CD4-positive, alpha-beta T cell (primary cell): ENCODE measurements at regions of chr11 and their contacts with region 1.

Region 1: GRCh38 chr11:96342961-96343711 is at the start of gene MAML2:
- DNase-seq: peak; percentile 83 to 97 (median 89)
- ATAC-seq: peak; percentile 88
- H3K4me3 ChIP-seq: peak within 1 kb of the TSS; percentile 92
- H3K4me3 Mint-ChIP-seq: peak within 1 kb of the TSS; percentile 97
- H3K27ac ChIP-seq: peak within 1 kb of the TSS; percentile 45 to 86
- H3K27ac Mint-ChIP-seq: peak within 1 kb of the TSS; percentile 87
- H3K4me1 ChIP-seq: peaks cover 43% of the 10 kb centered on the region
- H3K4me1 Mint-ChIP-seq: peaks cover 32% of the 10 kb centered on the region
- H3K27me3 ChIP-seq: no peaks in the 10 kb centered on the region
- H3K27me3 Mint-ChIP-seq: no peaks in the 10 kb centered on the region
- CTCF ChIP-seq: peak; percentile 96
- total RNA-seq, gene MAML2: 58.8 to 59.8 TPM

Region 2: DNA sequence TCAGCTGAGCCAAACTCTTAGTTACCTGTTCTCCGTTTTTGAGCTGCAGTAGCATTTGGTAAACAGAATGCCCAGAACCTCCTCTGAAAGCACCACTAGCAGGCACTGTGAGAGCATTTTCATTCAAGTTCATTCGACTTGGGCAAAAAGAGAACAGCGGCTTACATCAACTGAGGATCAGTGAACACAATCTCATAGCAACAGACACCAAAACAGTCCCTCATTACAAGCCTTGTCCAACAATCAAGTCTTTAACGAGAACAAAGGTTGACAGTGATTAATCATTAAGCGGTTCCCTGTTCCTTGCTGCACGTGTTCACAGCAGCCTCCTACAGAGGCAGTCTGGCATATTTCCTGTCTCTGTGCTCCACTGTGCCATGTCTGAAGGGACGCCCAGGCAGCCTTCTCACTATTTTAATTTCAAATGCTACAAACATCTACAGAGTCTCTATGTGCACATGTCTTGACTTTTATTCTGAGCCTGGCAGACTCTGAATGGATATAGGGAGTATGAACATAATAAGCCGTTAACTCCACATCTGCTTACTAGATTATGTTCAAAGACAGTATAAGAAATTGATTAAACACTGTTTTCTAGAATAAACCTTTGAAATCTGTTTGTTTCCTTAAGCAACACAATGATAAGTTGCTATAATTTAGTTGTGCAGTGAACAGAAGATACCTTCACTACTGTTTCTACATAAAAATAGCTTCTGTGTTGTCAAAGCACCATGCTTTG is 330.9 kb before region 1 on chr11:
- CTCF ChIA-PET with region 1: interaction called, 80 read pairs
- POLR2A ChIA-PET with region 1: interaction called, 37 read pairs
- intact Hi-C with region 1: loop called (anchors 1 to 2 kb)
- DNase-seq: peak; percentile 34 to 89 (median 57)
- ATAC-seq: peak; percentile 75
- H3K4me3 ChIP-seq: peak overlapping the region; percentile 24
- H3K4me3 Mint-ChIP-seq: peak overlapping the region; percentile 54
- H3K27ac ChIP-seq: peak overlapping the region; percentile 10 to 82
- H3K27ac Mint-ChIP-seq: no peak overlapping the region
- H3K4me1 ChIP-seq: peaks cover 33% of the 10 kb centered on the region
- H3K4me1 Mint-ChIP-seq: peaks cover 21% of the 10 kb centered on the region
- H3K27me3 ChIP-seq: no peaks in the 10 kb centered on the region
- H3K27me3 Mint-ChIP-seq: no peaks in the 10 kb centered on the region
- CTCF ChIP-seq: peak; percentile 39

Region 3: DNA sequence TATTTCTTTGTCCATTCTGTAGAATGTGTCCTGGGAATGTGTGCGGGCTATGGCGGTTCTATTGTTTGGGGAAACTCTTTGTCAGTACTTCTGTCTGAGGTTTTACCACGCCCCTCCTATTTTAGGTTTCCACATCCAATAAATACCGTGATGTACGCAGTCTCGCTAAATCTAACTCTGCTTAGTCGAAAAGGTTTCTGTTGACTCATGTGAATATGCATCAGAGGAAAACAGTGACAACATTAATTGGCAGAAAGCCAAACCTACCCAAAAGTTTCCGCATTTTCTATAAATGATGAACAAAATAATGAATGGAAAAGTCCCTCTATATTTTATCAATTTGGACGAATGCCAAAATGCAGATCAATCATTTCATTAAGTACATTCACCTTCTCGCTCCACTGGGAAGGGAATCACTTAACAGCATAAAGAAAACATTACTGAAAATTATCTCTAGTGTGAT is 143.5 kb before region 1 on chr11:
- CTCF ChIA-PET with region 1: interaction called, 7 read pairs
- POLR2A ChIA-PET with region 1: interaction called, 10 read pairs
- intact Hi-C with region 1: loop called in 1 of 2 experiments (anchors 5 kb)
- DNase-seq: peak in 6 of 14 experiments; percentile 19 to 85 (median 58)
- ATAC-seq: peak; percentile 87
- H3K4me3 ChIP-seq: peak overlapping the region; percentile 12
- H3K4me3 Mint-ChIP-seq: peak overlapping the region; percentile 81
- H3K27ac ChIP-seq: no peak overlapping the region
- H3K27ac Mint-ChIP-seq: peak overlapping the region; percentile 87
- H3K4me1 ChIP-seq: peaks cover 31% of the 10 kb centered on the region
- H3K4me1 Mint-ChIP-seq: peaks cover 89% of the 10 kb centered on the region
- H3K27me3 ChIP-seq: no peaks in the 10 kb centered on the region
- H3K27me3 Mint-ChIP-seq: no peaks in the 10 kb centered on the region
- CTCF ChIP-seq: no peak

Region 4: DNA sequence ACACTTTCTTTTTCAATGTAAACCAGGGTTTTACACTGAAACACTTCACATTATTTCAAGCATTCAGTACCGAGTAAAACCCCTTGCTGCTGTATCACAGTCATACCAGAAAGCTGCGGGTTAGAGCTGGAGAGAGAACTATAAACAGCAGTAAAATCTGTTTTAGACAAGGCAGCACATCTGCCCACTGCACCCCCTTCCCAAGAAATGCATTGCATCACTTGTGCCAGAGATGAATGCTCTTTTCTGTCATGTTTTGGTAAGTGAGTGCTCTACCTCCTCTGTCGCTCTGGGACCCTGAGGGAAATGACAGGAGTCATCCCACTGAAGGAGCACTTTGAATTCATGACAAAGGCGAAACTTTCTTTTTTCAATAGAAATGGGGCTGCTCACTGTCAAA is 107.4 kb before region 1 on chr11:
- CTCF ChIA-PET with region 1: interaction called, 14 read pairs
- POLR2A ChIA-PET with region 1: interaction called, 4 read pairs
- intact Hi-C with region 1: no loop called
- DNase-seq: no peak
- ATAC-seq: peak; percentile 71
- H3K4me3 ChIP-seq: no peak overlapping the region
- H3K4me3 Mint-ChIP-seq: peak overlapping the region; percentile 37
- H3K27ac ChIP-seq: no peak overlapping the region
- H3K27ac Mint-ChIP-seq: no peak overlapping the region
- H3K4me1 ChIP-seq: peaks cover 4% of the 10 kb centered on the region
- H3K4me1 Mint-ChIP-seq: peaks cover 34% of the 10 kb centered on the region
- H3K27me3 ChIP-seq: no peaks in the 10 kb centered on the region
- H3K27me3 Mint-ChIP-seq: no peaks in the 10 kb centered on the region
- CTCF ChIP-seq: no peak

Region 5: DNA sequence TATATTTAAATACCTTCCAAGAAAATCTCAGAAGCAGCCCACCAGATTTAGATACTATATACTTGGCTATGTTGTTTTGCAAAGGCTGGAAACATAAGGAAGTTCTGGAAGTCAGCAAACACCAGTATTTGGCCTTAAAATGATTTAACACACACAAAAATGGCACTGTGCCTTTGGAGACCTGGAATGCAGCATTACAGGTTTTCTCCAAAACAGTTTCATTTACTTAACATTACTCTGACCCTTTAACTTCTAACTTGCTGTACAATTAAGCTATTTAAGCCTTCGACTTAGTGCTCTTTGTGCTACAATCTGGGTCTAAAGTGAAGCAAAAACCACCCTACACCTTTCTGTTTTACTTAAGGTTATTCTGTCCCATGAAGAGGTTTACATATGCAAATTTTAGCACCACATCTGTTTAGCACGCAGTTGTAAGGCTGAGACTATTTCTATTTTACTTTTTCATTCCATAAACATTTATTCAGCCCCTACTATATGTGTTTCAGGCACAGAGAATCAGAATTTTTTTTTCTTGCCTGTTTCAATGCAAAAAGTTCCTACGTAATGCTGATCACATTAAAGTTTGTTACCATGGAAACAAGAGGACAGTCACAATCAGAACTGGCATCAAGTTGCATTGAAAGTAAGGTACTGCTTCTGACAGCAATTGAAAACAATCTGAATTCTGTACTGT is 70.5 kb before region 1 on chr11:
- CTCF ChIA-PET with region 1: interaction called, 13 read pairs
- POLR2A ChIA-PET with region 1: interaction called, 27 read pairs
- intact Hi-C with region 1: loop called (anchors 5 kb)
- DNase-seq: peak in 3 of 14 experiments; percentile 69 to 82 (median 75)
- ATAC-seq: peak; percentile 91
- H3K4me3 ChIP-seq: no peak overlapping the region
- H3K4me3 Mint-ChIP-seq: peak overlapping the region; percentile 2
- H3K27ac ChIP-seq: peak overlapping the region; percentile 14 to 27
- H3K27ac Mint-ChIP-seq: peak overlapping the region; percentile 83
- H3K4me1 ChIP-seq: peaks cover 6% of the 10 kb centered on the region
- H3K4me1 Mint-ChIP-seq: peaks cover 57% of the 10 kb centered on the region
- H3K27me3 ChIP-seq: no peaks in the 10 kb centered on the region
- H3K27me3 Mint-ChIP-seq: no peaks in the 10 kb centered on the region
- CTCF ChIP-seq: no peak

Region 6: GRCh38 chr11:96384150-96384549 is 41.0 kb after region 1 on chr11:
- CTCF ChIA-PET with region 1: interaction called, 28 read pairs
- POLR2A ChIA-PET with region 1: interaction called, 24 read pairs
- intact Hi-C with region 1: loop called in 1 of 2 experiments (anchors 5 kb)
- DNase-seq: no peak
- ATAC-seq: no peak
- H3K4me3 ChIP-seq: no peak overlapping the region
- H3K4me3 Mint-ChIP-seq: peak overlapping the region; percentile 23
- H3K27ac ChIP-seq: no peak overlapping the region
- H3K27ac Mint-ChIP-seq: peak overlapping the region; percentile 64
- H3K4me1 ChIP-seq: peaks cover 5% of the 10 kb centered on the region
- H3K4me1 Mint-ChIP-seq: peaks cover 49% of the 10 kb centered on the region
- H3K27me3 ChIP-seq: no peaks in the 10 kb centered on the region
- H3K27me3 Mint-ChIP-seq: no peaks in the 10 kb centered on the region
- CTCF ChIP-seq: no peak

Region 7: DNA sequence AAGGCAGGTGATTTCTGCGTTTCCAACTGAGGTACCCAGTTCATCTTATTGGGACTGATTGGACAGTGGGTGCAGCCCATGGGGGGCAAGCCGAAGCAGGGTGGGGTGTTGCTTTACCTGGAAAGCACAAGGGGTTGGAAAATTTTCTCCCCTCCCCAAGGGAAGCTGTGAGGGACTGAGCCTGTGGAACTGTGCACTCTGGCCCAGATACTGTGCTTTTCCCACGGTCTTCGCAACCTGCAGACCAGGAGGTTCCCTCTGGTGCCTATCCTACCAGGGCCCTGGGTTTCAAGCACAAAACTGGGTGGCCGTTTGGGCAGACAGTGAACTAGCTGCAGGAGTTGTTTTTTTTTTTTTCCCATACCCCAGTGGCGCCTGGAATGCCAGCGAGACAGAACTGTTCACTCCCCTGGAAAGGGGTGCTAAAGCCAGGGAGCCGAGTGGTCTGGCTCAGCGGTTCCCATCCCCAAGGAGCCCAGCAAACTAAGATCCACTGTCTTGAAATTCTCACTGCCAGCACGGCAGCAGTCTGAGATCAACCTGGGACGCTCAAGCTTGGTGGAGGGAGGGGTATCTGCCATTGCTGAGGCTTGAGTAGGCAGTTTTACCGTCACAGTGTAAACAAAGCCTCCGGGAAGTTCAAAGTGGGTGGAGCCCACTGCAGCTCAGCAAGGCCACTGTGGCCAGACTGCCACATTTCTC is 143.9 kb after region 1 on chr11:
- CTCF ChIA-PET with region 1: no interaction called
- POLR2A ChIA-PET with region 1: no interaction called
- intact Hi-C with region 1: no loop called
- DNase-seq: no peak
- ATAC-seq: no peak
- H3K4me3 ChIP-seq: no peak overlapping the region
- H3K4me3 Mint-ChIP-seq: no peak overlapping the region
- H3K27ac ChIP-seq: no peak overlapping the region
- H3K27ac Mint-ChIP-seq: no peak overlapping the region
- H3K4me1 ChIP-seq: no peaks in the 10 kb centered on the region
- H3K4me1 Mint-ChIP-seq: no peaks in the 10 kb centered on the region
- H3K27me3 ChIP-seq: peaks cover 7 to 16% of the 10 kb centered on the region in 2 experiments
- H3K27me3 Mint-ChIP-seq: peaks cover 63% of the 10 kb centered on the region
- CTCF ChIP-seq: no peak